GM12878 (cell line): ENCODE measurements at regions of chr3 and their contacts with region 1.

Region 1: GRCh38 chr3:52220380-52221026 is 4.9 kb downstream of the TLR9 start:
- DNase-seq: no peak
- ATAC-seq: peak; percentile 95
- H3K4me3 ChIP-seq: no peak overlapping the region
- H3K27ac ChIP-seq: no peak overlapping the region
- H3K4me1 ChIP-seq: peaks cover 25% of the 10 kb centered on the region
- H3K27me3 ChIP-seq: no peaks in the 10 kb centered on the region
- CTCF ChIP-seq: peak; percentile 92 to 96 (median 93)
- EP300 ChIP-seq: no peak
- POLR2A ChIP-seq: no peak
- RAD21 ChIP-seq: peak; percentile 83

Region 2: GRCh38 chr3:52231502-52232293 is 11.2 kb after region 1 on chr3:
- CTCF ChIA-PET with region 1: interaction called, 53 read pairs
- POLR2A ChIA-PET with region 1: interaction called, 43 read pairs
- RAD21 ChIA-PET with region 1: interaction called, 10 read pairs
- SMC1A ChIA-PET with region 1: interaction called, 25 read pairs
- in situ Hi-C with region 1: no loop called
- intact Hi-C with region 1: no loop called
- DNase-seq: no peak
- ATAC-seq: peak; percentile 92
- H3K4me3 ChIP-seq: no peak overlapping the region
- H3K27ac ChIP-seq: no peak overlapping the region
- H3K4me1 ChIP-seq: peaks cover 9% of the 10 kb centered on the region
- H3K27me3 ChIP-seq: no peaks in the 10 kb centered on the region
- CTCF ChIP-seq: peak; percentile 92 to 98 (median 95)
- EP300 ChIP-seq: no peak
- POLR2A ChIP-seq: no peak
- RAD21 ChIP-seq: peak; percentile 78

Region 3: DNA sequence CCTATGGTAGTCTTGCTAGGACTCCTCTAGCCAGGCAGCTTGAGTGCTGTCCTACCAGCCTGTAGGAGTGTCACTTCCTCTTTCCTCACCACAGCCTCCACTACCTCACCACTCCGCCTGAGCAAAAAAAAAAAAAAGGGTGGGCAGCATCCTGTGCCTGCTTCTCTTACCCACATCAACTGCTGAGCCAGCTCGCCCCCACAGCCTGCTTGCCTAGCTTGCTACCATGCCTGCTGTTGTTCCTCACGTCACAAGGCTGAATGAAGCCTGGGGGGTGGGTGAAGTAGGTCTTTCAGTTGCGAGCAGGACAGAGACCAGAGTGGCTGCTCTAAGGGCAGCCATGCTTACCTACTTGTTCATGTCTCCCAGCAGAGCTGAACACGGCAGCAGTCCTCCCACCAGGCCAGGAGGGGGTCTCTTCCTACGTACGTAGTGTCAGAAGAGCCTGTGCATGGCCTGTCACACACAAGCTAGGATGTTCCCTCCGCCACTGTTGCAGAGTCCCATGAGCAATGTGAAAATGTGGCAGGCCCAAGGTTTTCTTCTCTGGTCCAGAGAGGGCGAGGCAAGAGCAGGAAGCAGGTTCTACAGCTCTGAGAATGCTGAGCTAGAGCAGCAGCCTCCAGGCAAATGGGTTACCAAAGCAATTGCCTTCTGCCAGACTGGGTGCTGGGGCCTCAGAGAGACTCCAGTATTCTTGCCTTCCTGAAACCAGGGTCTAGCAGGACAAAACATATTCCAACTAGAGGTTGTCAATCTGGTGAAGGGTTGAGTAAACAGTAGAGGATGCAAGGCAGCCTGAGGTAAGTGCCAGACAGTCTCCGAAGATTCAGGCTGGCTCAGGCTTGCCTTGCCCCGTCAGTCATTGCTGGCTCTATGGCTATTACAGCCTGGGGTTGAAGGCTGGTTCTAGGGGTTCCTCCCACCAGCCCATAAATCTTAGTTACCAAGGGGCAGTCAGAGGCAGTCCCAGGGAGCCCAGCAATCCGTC is 33.1 kb after region 1 on chr3:
- CTCF ChIA-PET with region 1: interaction called, 11 read pairs
- POLR2A ChIA-PET with region 1: interaction called, 12 read pairs
- RAD21 ChIA-PET with region 1: interaction called, 8 read pairs
- SMC1A ChIA-PET with region 1: interaction called, 9 read pairs
- in situ Hi-C with region 1: no loop called
- intact Hi-C with region 1: no loop called
- DNase-seq: peak; percentile 85
- ATAC-seq: peak; percentile 98
- H3K4me3 ChIP-seq: no peak overlapping the region
- H3K27ac ChIP-seq: peak overlapping the region; percentile 88
- H3K4me1 ChIP-seq: peaks cover 18% of the 10 kb centered on the region
- H3K27me3 ChIP-seq: no peaks in the 10 kb centered on the region
- CTCF ChIP-seq: no peak
- EP300 ChIP-seq: peak; percentile 66 to 86; a peak in 3 of 4 replicates
- POLR2A ChIP-seq: peak; percentile 75
- RAD21 ChIP-seq: 0 out of 2 replicates have a peak, but pooled peaks have one; percentile 2

Region 4: GRCh38 chr3:52278510-52279069 is 58.1 kb after region 1 on chr3 and contains the start of gene WDR82:
- CTCF ChIA-PET with region 1: interaction called, 35 read pairs
- POLR2A ChIA-PET with region 1: interaction called, 34 read pairs
- RAD21 ChIA-PET with region 1: interaction called, 27 read pairs
- SMC1A ChIA-PET with region 1: interaction called, 8 read pairs
- in situ Hi-C with region 1: no loop called
- intact Hi-C with region 1: no loop called
- DNase-seq: peak; percentile 67
- ATAC-seq: peak; percentile 84
- H3K4me3 ChIP-seq: peak within 1 kb of the TSS; percentile 91
- H3K27ac ChIP-seq: peak within 1 kb of the TSS; percentile 82
- H3K4me1 ChIP-seq: no peaks in the 10 kb centered on the region; the same call in 1 of the 2 replicates
- H3K27me3 ChIP-seq: no peaks in the 10 kb centered on the region
- CTCF ChIP-seq: peak; percentile 33 to 46 (median 43); a peak in 5 of 6 replicates
- EP300 ChIP-seq: no peak
- POLR2A ChIP-seq: peak; percentile 100
- RAD21 ChIP-seq: peak; percentile 37
- polyA plus RNA-seq, gene WDR82: 10.4 to 12.5 TPM

Region 5: DNA sequence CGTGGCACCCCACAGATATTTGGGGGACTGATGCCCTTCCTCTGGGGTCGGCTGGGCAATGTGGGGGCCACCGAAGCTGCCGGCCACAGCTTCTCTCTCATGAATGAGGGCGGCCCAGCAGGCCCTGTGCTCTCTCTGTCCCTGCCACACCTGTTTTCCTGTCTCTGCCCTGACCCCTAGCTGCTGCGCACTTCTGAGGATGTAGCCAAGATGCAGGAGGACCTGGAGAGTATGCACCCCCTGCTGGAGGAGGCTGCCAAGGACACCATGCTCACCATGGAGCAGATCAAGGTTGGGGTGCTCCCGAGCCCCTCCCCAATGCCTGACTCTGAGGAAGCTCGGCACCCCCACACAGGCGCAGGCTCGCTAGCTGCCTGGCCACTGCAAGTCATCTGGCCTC is 164.7 kb after region 1 on chr3:
- CTCF ChIA-PET with region 1: interaction called, 9 read pairs
- POLR2A ChIA-PET with region 1: no interaction called
- RAD21 ChIA-PET with region 1: interaction called, 4 read pairs
- SMC1A ChIA-PET with region 1: interaction called, 4 read pairs
- in situ Hi-C with region 1: no loop called
- intact Hi-C with region 1: loop called (anchors 1 kb)
- DNase-seq: no peak
- ATAC-seq: peak; percentile 90
- H3K4me3 ChIP-seq: no peak overlapping the region
- H3K27ac ChIP-seq: no peak overlapping the region
- H3K4me1 ChIP-seq: no peaks in the 10 kb centered on the region; the same call in 1 of the 2 replicates
- H3K27me3 ChIP-seq: no peaks in the 10 kb centered on the region
- CTCF ChIP-seq: peak; percentile 59 to 73 (median 72)
- EP300 ChIP-seq: no peak
- POLR2A ChIP-seq: no peak
- RAD21 ChIP-seq: peak; percentile 55